Naive thymus-derived CD4-positive, alpha-beta T cell (primary cell): ENCODE measurements at regions of chr2 and their contacts with region 1.

Region 1: GRCh38 chr2:9782197-9782719 is 61.0 kb upstream of the TAF1B start:
- DNase-seq: peak in 8 of 9 donors; percentile 32 to 75 (median 65)
- ATAC-seq: peak; percentile 86
- H3K4me3 ChIP-seq: no peak overlapping the region
- H3K4me3 Mint-ChIP-seq: peak overlapping the region in 9 of 10 donors; percentile 4 to 63 (median 31)
- H3K27ac ChIP-seq: peak overlapping the region; percentile 56
- H3K27ac Mint-ChIP-seq: peak overlapping the region; percentile 45 to 94 (median 88)
- H3K4me1 ChIP-seq: peaks cover 31 to 43% of the 10 kb centered on the region in 2 donors
- H3K4me1 Mint-ChIP-seq: peaks cover 23 to 68% (median 49%) of the 10 kb centered on the region in 7 donors
- H3K27me3 ChIP-seq: no peaks in the 10 kb centered on the region
- H3K27me3 Mint-ChIP-seq: no peaks in the 10 kb centered on the region

Region 2: GRCh38 chr2:9423100-9423921 is 358.9 kb before region 1 on chr2 and contains the starts of genes CPSF3 and ITGB1BP1:
- CTCF ChIA-PET with region 1: no interaction called
- POLR2A ChIA-PET with region 1: interaction called, 4 read pairs
- intact Hi-C with region 1: loop called (anchors 1 to 5 kb)
- DNase-seq: peak; percentile 88 to 98 (median 94)
- ATAC-seq: peak; percentile 92
- H3K4me3 ChIP-seq: peak within 1 kb of the TSS; percentile 90
- H3K4me3 Mint-ChIP-seq: peak within 1 kb of the TSS in 5 of 10 donors; percentile 87 to 95 (median 92)
- H3K27ac ChIP-seq: peak within 1 kb of the TSS; percentile 84
- H3K27ac Mint-ChIP-seq: peak within 1 kb of the TSS in 8 of 9 donors; percentile 82 to 97 (median 92)
- H3K4me1 ChIP-seq: peaks cover 22 to 24% of the 10 kb centered on the region in 2 donors
- H3K4me1 Mint-ChIP-seq: peaks cover 20 to 41% (median 28%) of the 10 kb centered on the region in 7 donors
- H3K27me3 ChIP-seq: no peaks in the 10 kb centered on the region
- H3K27me3 Mint-ChIP-seq: no peaks in the 10 kb centered on the region
- total RNA-seq, gene CPSF3: 18.0 to 47.8 (median 21.7) TPM
- total RNA-seq, gene ITGB1BP1: 45.1 to 107 (median 54.3) TPM

Region 3: DNA sequence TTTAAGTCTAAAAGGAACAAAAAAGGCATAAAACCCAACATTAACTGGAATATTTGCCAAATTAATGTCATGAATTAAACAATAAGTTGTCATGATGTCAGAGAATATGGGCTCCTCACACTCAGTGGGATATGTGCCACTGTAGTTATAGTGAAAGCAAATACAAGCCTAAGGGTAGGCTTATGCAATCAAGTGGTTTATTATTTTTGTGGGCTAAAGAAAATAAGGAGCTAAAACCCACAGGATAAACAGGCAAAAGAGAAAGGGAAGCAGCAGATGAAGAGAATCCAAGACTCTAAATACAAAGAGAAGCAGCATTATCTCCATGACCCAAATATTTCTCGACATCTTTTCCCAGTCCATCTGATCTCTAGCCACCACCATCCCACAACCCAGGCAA is 169.0 kb before region 1 on chr2:
- CTCF ChIA-PET with region 1: no interaction called
- POLR2A ChIA-PET with region 1: no interaction called
- intact Hi-C with region 1: loop called in 1 of 2 experiments (anchors 1 kb)
- DNase-seq: no peak
- ATAC-seq: no peak
- H3K4me3 ChIP-seq: no peak overlapping the region
- H3K4me3 Mint-ChIP-seq: no peak overlapping the region
- H3K27ac ChIP-seq: no peak overlapping the region
- H3K27ac Mint-ChIP-seq: no peak overlapping the region
- H3K4me1 ChIP-seq: peaks cover 12 to 30% of the 10 kb centered on the region in 2 donors
- H3K4me1 Mint-ChIP-seq: peaks cover 57 to 97% (median 89%) of the 10 kb centered on the region in 7 donors
- H3K27me3 ChIP-seq: no peaks in the 10 kb centered on the region
- H3K27me3 Mint-ChIP-seq: no peaks in the 10 kb centered on the region

Region 4: DNA sequence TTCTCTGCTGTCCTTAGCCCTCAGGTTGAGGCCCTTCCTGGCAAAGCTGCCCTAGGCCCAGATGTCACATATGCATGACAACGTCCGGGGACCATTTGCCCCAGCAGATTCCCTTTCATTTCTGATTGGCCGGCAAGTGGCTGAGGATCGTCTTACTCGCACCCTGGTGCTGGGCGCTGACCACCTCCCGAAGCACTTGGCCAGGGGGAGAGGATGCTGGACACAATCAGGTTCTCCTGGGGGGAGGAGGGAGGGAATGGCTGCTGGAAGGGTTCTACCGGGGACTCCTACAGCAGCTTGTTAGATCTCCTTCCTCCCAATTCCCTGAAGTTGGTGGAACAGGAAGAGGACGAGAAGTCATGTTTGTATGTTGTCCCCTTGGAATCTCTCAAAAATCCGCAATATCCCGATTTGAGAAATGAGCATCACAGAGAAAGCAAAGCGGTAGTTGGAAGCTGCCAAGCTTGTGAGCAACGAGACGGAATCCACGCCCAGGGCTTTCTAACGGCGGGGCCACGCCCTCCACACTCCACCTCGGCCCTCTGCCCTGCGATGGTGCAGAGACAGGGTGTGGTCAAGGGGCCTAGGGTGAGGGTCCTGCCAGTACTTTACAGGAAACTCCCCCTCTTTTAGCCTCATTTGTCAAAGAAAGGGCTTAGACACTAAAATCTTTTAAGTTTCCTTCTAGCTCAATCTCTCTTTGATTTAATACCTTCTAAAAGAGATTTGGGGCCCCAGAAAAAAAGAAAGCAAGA is 89.6 kb before region 1 on chr2:
- CTCF ChIA-PET with region 1: no interaction called
- POLR2A ChIA-PET with region 1: no interaction called
- intact Hi-C with region 1: no loop called
- DNase-seq: no peak
- ATAC-seq: no peak
- H3K4me3 ChIP-seq: no peak overlapping the region
- H3K4me3 Mint-ChIP-seq: no peak overlapping the region
- H3K27ac ChIP-seq: no peak overlapping the region
- H3K27ac Mint-ChIP-seq: peak overlapping the region in 1 of 9 donors; percentile 36
- H3K4me1 ChIP-seq: peaks cover 0 to 13% of the 10 kb centered on the region in 2 donors
- H3K4me1 Mint-ChIP-seq: peaks cover 0 to 8% (median under 1%) of the 10 kb centered on the region in 7 donors
- H3K27me3 ChIP-seq: no peaks in the 10 kb centered on the region
- H3K27me3 Mint-ChIP-seq: peaks cover 0 to 2% (median 0%) of the 10 kb centered on the region in 5 donors

Region 5: GRCh38 chr2:9703085-9703641 is 79.1 kb before region 1 on chr2:
- CTCF ChIA-PET with region 1: no interaction called
- POLR2A ChIA-PET with region 1: no interaction called
- intact Hi-C with region 1: loop called in 1 of 2 experiments (anchors 2 kb)
- DNase-seq: peak in 8 of 9 donors; percentile 7 to 77 (median 44)
- ATAC-seq: peak; percentile 90
- H3K4me3 ChIP-seq: peak overlapping the region; percentile 16
- H3K4me3 Mint-ChIP-seq: peak overlapping the region in 2 of 10 donors; percentile 23 to 26
- H3K27ac ChIP-seq: no peak overlapping the region
- H3K27ac Mint-ChIP-seq: peak overlapping the region in 1 of 9 donors; percentile 78
- H3K4me1 ChIP-seq: peaks cover 7 to 31% of the 10 kb centered on the region in 2 donors
- H3K4me1 Mint-ChIP-seq: peaks cover 8 to 39% (median 13%) of the 10 kb centered on the region in 7 donors
- H3K27me3 ChIP-seq: no peaks in the 10 kb centered on the region
- H3K27me3 Mint-ChIP-seq: peaks cover 0 to 4% (median 0%) of the 10 kb centered on the region in 5 donors

Region 6: GRCh38 chr2:9753276-9753600 is 29.0 kb before region 1 on chr2:
- CTCF ChIA-PET with region 1: no interaction called
- POLR2A ChIA-PET with region 1: no interaction called
- intact Hi-C with region 1: loop called in 1 of 2 experiments (anchors 2 kb)
- DNase-seq: no peak
- ATAC-seq: peak; percentile 81
- H3K4me3 ChIP-seq: peak overlapping the region; percentile 34
- H3K4me3 Mint-ChIP-seq: peak overlapping the region in 7 of 10 donors; percentile 42 to 92 (median 65)
- H3K27ac ChIP-seq: no peak overlapping the region
- H3K27ac Mint-ChIP-seq: peak overlapping the region in 6 of 9 donors; percentile 9 to 98 (median 62)
- H3K4me1 ChIP-seq: peaks cover 24 to 28% of the 10 kb centered on the region in 2 donors
- H3K4me1 Mint-ChIP-seq: peaks cover 17 to 57% (median 32%) of the 10 kb centered on the region in 7 donors
- H3K27me3 ChIP-seq: no peaks in the 10 kb centered on the region
- H3K27me3 Mint-ChIP-seq: peaks cover 16 to 36% (median 20%) of the 10 kb centered on the region in 5 donors

Region 7: GRCh38 chr2:9799665-9800632 is 17.7 kb after region 1 on chr2:
- CTCF ChIA-PET with region 1: interaction called, 4 read pairs
- POLR2A ChIA-PET with region 1: no interaction called
- intact Hi-C with region 1: loop called (anchors 1 kb)
- DNase-seq: peak; percentile 55 to 89 (median 76)
- ATAC-seq: peak; percentile 91
- H3K4me3 ChIP-seq: peak overlapping the region; percentile 10
- H3K4me3 Mint-ChIP-seq: peak overlapping the region; percentile 4 to 89 (median 60)
- H3K27ac ChIP-seq: no peak overlapping the region
- H3K27ac Mint-ChIP-seq: peak overlapping the region in 5 of 9 donors; percentile 7 to 85 (median 28)
- H3K4me1 ChIP-seq: peaks cover 9 to 12% of the 10 kb centered on the region in 2 donors
- H3K4me1 Mint-ChIP-seq: peaks cover 11 to 29% (median 14%) of the 10 kb centered on the region in 7 donors
- H3K27me3 ChIP-seq: no peaks in the 10 kb centered on the region
- H3K27me3 Mint-ChIP-seq: peaks cover 0 to 10% (median 0%) of the 10 kb centered on the region in 5 donors